ENCODE measurements at regions of chr11 and their contacts with region 1.

Region 1: GRCh38 chr11:96342961-96343711 is at the start of gene MAML2:
- DNase-seq: peak; percentile 46
- H3K4me3 ChIP-seq: peak within 1 kb of the TSS; percentile 74
- H3K27me3 ChIP-seq: no peaks in the 10 kb centered on the region
- CTCF ChIP-seq: peak; percentile 96
- polyA plus RNA-seq, gene MAML2: 20.5 and 22.0 TPM in 2 replicates

Region 2: DNA sequence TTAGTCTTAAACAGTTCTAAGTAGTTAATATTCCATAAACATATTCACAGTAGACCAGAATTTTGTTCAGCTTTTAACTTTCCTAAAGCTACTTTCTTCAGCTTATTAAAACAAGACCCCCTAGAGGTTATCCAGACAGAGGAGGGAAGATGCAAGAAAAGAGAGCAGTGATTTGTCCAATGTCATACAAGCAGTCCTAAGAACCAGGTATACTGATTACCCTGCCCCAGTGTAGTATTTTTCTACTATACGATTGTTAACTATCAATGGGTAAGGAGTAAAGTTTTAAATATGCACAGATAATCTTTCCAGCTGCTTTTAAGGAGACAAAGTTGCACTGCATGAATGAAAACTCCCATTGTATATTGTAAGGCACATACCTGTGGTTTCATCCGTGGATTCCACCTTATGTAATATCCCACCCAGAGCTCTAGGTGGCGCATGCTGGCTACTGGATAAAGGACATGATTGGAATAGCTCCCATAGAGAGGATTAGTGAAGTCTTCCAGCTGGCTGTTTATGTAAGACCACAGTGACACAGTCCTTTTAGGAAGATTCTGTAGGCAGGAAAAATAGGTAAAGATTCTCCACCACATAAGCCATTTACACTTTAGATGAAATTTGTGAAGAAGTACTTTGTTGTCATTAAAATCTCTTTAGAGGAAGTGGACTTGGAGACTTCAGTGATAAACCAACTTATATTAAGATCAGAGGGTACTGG is 507.2 kb before region 1 on chr11:
- CTCF ChIA-PET with region 1: interaction called, 16 read pairs
- POLR2A ChIA-PET with region 1: no interaction called
- DNase-seq: peak; percentile 54
- H3K4me3 ChIP-seq: no peak overlapping the region
- H3K27me3 ChIP-seq: no peaks in the 10 kb centered on the region
- CTCF ChIP-seq: peak; percentile 86

Region 3: DNA sequence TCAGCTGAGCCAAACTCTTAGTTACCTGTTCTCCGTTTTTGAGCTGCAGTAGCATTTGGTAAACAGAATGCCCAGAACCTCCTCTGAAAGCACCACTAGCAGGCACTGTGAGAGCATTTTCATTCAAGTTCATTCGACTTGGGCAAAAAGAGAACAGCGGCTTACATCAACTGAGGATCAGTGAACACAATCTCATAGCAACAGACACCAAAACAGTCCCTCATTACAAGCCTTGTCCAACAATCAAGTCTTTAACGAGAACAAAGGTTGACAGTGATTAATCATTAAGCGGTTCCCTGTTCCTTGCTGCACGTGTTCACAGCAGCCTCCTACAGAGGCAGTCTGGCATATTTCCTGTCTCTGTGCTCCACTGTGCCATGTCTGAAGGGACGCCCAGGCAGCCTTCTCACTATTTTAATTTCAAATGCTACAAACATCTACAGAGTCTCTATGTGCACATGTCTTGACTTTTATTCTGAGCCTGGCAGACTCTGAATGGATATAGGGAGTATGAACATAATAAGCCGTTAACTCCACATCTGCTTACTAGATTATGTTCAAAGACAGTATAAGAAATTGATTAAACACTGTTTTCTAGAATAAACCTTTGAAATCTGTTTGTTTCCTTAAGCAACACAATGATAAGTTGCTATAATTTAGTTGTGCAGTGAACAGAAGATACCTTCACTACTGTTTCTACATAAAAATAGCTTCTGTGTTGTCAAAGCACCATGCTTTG is 330.9 kb before region 1 on chr11:
- CTCF ChIA-PET with region 1: interaction called, 10 read pairs
- POLR2A ChIA-PET with region 1: no interaction called
- DNase-seq: no peak
- H3K4me3 ChIP-seq: no peak overlapping the region
- H3K27me3 ChIP-seq: no peaks in the 10 kb centered on the region
- CTCF ChIP-seq: peak; percentile 55

Region 4: DNA sequence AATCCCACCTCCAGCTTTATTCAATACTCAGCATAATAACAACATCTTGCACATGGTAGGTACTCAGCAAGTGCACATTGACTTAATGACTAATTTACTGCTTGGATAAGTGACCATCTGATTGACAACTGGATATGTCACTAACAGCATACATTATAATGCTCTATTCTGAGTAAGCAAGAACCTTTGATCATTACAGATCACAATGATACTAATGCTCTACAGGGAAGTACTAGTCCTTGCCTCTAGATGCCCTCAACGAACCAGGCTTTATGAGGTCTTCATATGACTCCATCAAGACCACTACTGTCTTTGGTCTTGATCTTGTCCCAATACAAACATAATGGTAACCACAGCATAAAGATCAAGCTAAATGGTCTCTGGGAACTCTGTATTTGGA is 251.7 kb before region 1 on chr11:
- CTCF ChIA-PET with region 1: interaction called, 16 read pairs
- POLR2A ChIA-PET with region 1: no interaction called
- DNase-seq: no peak
- H3K4me3 ChIP-seq: no peak overlapping the region
- H3K27me3 ChIP-seq: no peaks in the 10 kb centered on the region
- CTCF ChIP-seq: no peak

Region 5: GRCh38 chr11:96215110-96215782 is 127.9 kb before region 1 on chr11:
- CTCF ChIA-PET with region 1: interaction called, 11 read pairs
- POLR2A ChIA-PET with region 1: no interaction called
- DNase-seq: no peak
- H3K4me3 ChIP-seq: no peak overlapping the region
- H3K27me3 ChIP-seq: no peaks in the 10 kb centered on the region
- CTCF ChIP-seq: no peak

Region 6: DNA sequence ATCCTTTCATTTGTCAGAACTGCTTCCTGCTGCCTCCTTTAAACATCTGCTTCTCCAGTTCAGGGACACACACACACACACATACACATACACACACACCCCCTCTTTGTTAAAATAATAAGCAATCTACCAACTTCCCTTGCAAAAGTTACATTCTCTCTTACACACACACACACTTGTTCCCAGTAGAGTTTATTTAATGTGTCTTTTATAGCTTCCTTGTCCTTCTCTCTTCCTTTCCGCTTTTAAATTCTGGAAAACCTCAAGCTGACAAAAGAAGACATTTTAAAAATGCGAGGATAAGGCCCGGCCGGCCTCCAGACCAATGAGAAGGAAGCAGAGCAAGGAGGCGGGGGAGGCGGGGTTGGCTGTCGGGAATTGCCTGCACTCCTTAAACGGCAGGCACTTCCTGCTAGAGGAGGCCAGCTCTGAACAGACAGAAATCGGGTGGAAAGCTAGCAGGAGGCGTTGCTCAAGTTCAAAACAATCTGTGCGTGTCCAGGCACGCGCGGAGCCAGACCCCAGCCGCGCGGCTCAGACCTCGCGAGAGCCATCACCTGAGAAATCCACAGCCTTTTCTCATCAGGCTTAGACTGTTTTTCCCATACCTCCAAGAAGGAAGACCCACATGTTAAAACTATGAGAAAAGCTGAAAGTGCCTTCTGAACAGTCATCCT is 100.0 kb before region 1 on chr11:
- CTCF ChIA-PET with region 1: interaction called, 37 read pairs
- POLR2A ChIA-PET with region 1: interaction called, 6 read pairs
- DNase-seq: peak; percentile 88
- H3K4me3 ChIP-seq: peak overlapping the region; percentile 32
- H3K27me3 ChIP-seq: no peaks in the 10 kb centered on the region
- CTCF ChIP-seq: no peak

Region 7: GRCh38 chr11:96311120-96311568 is 32.0 kb before region 1 on chr11:
- CTCF ChIA-PET with region 1: interaction called, 18 read pairs
- POLR2A ChIA-PET with region 1: interaction called, 4 read pairs
- DNase-seq: no peak
- H3K4me3 ChIP-seq: no peak overlapping the region
- H3K27me3 ChIP-seq: no peaks in the 10 kb centered on the region
- CTCF ChIP-seq: no peak

Region 8: DNA sequence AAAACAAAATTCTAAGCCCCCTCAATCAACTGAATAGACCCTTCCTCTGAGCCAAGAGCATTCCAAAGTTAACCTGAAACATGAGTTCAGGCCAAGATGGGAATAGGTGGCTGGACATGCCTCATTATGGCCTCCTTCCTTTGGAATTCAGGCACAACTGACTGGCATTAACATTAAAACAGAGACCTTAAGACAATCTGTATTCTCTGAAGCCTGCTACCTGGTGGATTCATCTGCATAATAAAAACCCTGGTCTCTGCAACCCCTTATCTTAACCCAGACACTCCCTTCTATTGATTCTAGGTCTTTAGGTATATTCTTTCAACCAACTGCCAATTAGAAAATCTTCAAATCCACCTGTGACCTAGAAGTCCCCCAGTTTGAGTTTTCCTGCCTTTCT is 113.0 kb after region 1 on chr11:
- CTCF ChIA-PET with region 1: no interaction called
- POLR2A ChIA-PET with region 1: no interaction called
- DNase-seq: no peak
- H3K4me3 ChIP-seq: no peak overlapping the region
- H3K27me3 ChIP-seq: no peaks in the 10 kb centered on the region
- CTCF ChIP-seq: no peak

Region 9: DNA sequence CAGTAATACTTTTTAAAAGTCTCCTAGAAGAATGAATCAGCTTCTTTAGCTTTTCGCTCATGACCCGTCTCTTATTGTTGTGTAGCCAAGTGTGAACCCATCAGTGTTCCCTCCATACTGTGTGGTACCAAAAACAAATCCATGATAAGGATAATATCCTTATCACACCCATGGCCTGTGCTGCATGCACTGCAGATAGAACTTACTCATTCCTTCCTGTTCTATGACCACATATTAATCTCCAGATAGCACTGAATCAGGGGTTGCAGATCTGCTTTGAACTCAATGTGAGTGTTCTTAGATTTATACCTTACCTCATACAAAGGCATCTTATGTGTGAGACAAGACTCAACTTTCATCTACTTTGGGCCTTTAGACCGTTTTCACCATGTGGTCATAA is 420.1 kb after region 1 on chr11:
- CTCF ChIA-PET with region 1: no interaction called
- POLR2A ChIA-PET with region 1: no interaction called
- DNase-seq: no peak
- H3K4me3 ChIP-seq: no peak overlapping the region
- H3K27me3 ChIP-seq: no peaks in the 10 kb centered on the region
- CTCF ChIP-seq: no peak

Measured in BJ (cell line).